Activated CD4-positive, alpha-beta T cell treated with anti-CD3 and anti-CD28 coated beads for 36 hours (primary cell): ENCODE measurements at regions of chr3 and their contacts with region 1.

Region 1: GRCh38 chr3:147119989-147120388 is 286.4 kb downstream of the ZIC4 start:
- DNase-seq: no peak
- ATAC-seq: no peak
- H3K4me3 Mint-ChIP-seq: no peak overlapping the region
- H3K27ac Mint-ChIP-seq: no peak overlapping the region
- H3K4me1 Mint-ChIP-seq: no peaks in the 10 kb centered on the region
- H3K27me3 Mint-ChIP-seq: no peaks in the 10 kb centered on the region

Region 2: DNA sequence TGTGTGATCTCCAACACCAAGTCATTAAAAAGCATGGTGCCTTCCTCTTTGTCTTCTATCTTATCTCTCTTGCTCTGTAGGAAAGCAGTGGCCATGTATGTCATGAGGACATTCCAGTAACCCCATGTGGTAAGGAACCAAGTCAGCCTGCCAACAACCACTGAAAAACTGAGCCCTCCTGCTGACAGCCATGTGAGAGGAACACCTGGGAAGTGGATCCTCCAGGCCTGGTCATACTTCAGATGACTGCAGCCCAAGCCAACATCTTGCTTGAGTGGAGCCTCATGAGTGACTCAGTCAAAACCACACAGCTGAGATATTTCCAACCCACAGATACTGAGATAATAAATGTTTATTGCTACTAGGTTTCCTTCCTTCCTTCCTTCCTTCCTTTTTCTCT is 886.5 kb after region 1 on chr3:
- CTCF ChIA-PET with region 1: no interaction called
- POLR2A ChIA-PET with region 1: no interaction called
- intact Hi-C with region 1: loop called in 1 of 2 experiments (anchors 10 kb)
- DNase-seq: no peak
- ATAC-seq: no peak
- H3K4me3 Mint-ChIP-seq: no peak overlapping the region
- H3K27ac Mint-ChIP-seq: no peak overlapping the region
- H3K4me1 Mint-ChIP-seq: no peaks in the 10 kb centered on the region
- H3K27me3 Mint-ChIP-seq: no peaks in the 10 kb centered on the region